Right cardiac atrium (tissue), 5 donors: ENCODE measurements at regions of chr7 and their contacts with region 1.

Region 1: GRCh38 chr7:80659120-80660055 is 20.9 kb downstream of the CD36 start:
- DNase-seq: no peak
- ATAC-seq: peak in 1 of 2 donors; percentile 42
- H3K4me3 ChIP-seq: no peak overlapping the region
- H3K27ac ChIP-seq: no peak overlapping the region
- H3K4me1 ChIP-seq: peaks cover 3% of the 10 kb centered on the region
- H3K27me3 ChIP-seq: no peaks in the 10 kb centered on the region

Region 2: GRCh38 chr7:80428161-80429054 is 231.0 kb before region 1 on chr7:
- intact Hi-C with region 1: loop called (anchors 5 to 10 kb)
- DNase-seq: no peak
- ATAC-seq: peak; percentile 69 to 76
- H3K4me3 ChIP-seq: no peak overlapping the region
- H3K27ac ChIP-seq: no peak overlapping the region
- H3K4me1 ChIP-seq: no peaks in the 10 kb centered on the region
- H3K27me3 ChIP-seq: no peaks in the 10 kb centered on the region

Region 3: GRCh38 chr7:80439894-80440821 is 219.2 kb before region 1 on chr7:
- intact Hi-C with region 1: loop called in 1 of 4 experiments (anchors 10 kb)
- DNase-seq: no peak
- ATAC-seq: peak; percentile 38 to 68
- H3K4me3 ChIP-seq: no peak overlapping the region
- H3K27ac ChIP-seq: no peak overlapping the region
- H3K4me1 ChIP-seq: peaks cover 2% of the 10 kb centered on the region
- H3K27me3 ChIP-seq: no peaks in the 10 kb centered on the region

Region 4: DNA sequence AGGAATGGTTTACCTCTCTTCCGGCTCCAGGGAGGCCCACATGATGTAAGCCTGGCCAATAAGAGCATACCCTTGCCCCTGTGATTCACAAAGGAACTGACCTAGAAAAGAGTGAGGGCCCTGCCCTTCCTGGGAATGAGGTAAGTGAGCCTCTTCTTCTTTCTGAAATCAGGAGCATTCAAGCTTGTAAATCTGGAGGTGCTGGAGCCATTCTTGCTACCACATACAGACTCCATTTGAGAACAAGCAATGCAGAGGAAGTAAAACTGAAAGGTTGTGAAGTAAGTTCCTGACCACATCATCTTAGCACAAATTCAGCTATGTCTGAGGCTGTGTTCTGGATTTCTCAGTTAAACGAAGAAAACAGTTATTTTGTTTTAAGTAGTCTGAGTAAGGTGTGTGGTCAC is 111.3 kb after region 1 on chr7:
- intact Hi-C with region 1: no loop called
- DNase-seq: no peak
- ATAC-seq: no peak
- H3K4me3 ChIP-seq: no peak overlapping the region
- H3K27ac ChIP-seq: no peak overlapping the region
- H3K4me1 ChIP-seq: peaks cover 1% of the 10 kb centered on the region
- H3K27me3 ChIP-seq: no peaks in the 10 kb centered on the region